ENCODE measurements at regions of chr15 and their contacts with region 1.

Region 1: DNA sequence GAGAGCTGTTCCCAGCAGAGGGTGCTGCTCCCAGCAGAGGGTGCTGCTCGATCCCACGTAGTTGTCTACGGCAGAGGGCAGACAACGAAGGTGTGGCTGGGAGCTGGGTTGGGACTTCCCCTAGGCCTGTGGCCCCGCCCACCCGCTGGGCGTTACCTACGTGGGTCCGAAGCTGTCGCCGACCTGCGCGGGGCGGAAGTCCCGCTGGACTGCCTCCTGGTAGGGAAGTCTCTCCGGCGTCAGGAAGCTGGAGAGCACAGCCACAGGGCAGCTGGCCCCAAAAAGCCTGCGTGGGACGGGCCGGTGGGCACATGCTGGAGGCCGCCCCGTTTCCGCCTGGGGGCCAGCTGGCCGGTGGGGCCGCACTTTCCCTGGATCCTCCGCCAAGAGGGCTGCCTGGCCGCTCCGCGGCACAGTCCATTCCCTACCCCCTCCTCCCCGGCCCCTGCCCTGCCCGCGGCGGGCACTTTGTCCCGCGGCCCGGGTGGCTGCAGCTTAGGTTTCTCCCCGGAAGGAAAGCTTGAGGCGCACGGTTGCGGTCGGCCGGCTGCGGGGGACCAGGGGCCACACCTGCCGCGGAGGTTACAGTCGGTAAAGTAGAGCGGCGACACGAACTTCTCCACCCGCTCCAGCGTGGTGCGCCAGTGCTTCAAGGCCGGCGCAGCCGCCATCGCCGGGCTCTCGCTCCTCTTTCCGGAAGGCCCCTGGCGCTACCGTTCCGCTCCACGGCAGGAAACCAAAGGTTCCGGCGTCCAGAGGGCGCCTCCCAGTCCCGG is at the start of gene MAN2C1:
- DNase-seq: peak; percentile 97
- H3K4me3 Mint-ChIP-seq: peak within 1 kb of the TSS; percentile 91
- H3K27ac Mint-ChIP-seq: peak within 1 kb of the TSS; percentile 96
- H3K4me1 Mint-ChIP-seq: peaks cover 8% of the 10 kb centered on the region
- H3K27me3 Mint-ChIP-seq: no peaks in the 10 kb centered on the region
- CTCF ChIP-seq: peak; percentile 64
- total RNA-seq, gene MAN2C1: 163 and 165 TPM in 2 replicates

Region 2: GRCh38 chr15:75178171-75179075 is 189.7 kb before region 1 on chr15:
- CTCF ChIA-PET with region 1: no interaction called
- POLR2A ChIA-PET with region 1: no interaction called
- intact Hi-C with region 1: no loop called
- DNase-seq: no peak
- H3K4me3 Mint-ChIP-seq: no peak overlapping the region
- H3K27ac Mint-ChIP-seq: no peak overlapping the region
- H3K4me1 Mint-ChIP-seq: peaks cover 14% of the 10 kb centered on the region
- H3K27me3 Mint-ChIP-seq: no peaks in the 10 kb centered on the region
- CTCF ChIP-seq: no peak

Region 3: DNA sequence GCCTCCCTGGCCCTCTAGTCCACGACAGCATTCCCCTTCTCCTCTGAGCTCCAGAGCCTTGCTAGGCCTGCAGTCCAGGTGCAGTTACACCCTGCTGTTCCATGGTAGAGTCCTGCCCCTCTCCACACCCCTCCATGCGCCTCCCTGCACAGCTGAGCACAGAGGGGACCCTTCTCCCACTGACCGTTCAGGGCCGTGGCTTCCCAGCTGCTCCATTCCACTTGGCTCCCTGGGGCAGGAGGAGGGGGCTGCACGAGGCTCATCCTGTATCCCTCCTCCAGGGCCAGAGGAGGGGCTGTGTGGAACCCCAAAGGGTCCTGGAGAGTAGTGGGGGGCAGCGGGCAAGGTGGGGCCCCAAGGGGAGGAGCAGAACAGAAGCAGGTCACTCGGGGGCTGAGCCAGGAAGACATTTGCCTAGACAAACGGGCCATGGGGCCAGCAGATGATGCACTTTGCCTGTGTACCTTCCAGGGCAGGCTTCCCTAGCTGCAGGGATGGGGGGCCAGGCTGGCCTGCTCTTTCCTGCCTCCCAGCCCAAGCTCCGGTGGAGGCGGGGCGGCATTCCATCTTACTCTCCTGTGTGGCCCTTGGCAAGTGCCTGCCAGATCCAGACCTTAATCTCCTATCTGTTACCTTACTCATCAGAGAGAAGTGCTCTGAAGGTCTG is 130.7 kb before region 1 on chr15:
- CTCF ChIA-PET with region 1: no interaction called
- POLR2A ChIA-PET with region 1: no interaction called
- intact Hi-C with region 1: no loop called
- DNase-seq: no peak
- H3K4me3 Mint-ChIP-seq: no peak overlapping the region
- H3K27ac Mint-ChIP-seq: no peak overlapping the region
- H3K4me1 Mint-ChIP-seq: no peaks in the 10 kb centered on the region
- H3K27me3 Mint-ChIP-seq: peaks cover 47% of the 10 kb centered on the region
- CTCF ChIP-seq: no peak

Region 4: DNA sequence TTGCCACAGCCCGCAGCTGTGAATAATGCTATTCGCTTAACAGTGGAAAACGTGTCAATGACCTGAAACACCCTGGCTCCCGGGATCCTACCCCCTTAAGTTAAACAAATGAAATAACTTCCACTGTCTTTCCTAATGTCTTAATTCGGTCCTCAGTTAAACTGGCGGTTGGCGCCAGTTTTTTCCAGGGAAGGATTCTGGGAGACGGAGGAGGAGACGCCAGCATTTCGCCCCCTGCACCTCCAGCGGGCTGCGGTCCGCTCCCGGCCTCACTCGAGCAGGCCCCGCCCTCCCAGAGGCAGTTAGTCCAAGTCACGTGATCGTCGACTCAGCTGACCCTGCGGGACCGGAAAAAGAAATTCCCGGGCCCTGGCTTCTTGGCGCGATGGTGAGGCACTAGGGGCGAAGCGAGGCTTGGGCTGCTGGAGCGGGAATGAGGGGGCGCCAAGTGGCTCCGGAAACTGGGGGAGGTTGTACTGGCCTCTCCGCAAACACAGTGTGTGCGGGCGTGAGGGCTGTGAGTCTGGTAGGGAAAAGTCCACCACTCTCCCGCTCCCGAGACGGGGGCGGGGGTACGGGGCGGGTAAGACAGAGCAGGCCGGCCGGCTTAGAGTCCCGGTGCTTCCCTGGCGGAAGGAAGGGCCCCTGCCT is 32.3 kb before region 1 on chr15 and contains the start of gene COMMD4:
- CTCF ChIA-PET with region 1: interaction called, 3 read pairs
- POLR2A ChIA-PET with region 1: interaction called, 21 read pairs
- intact Hi-C with region 1: no loop called
- DNase-seq: peak; percentile 94
- H3K4me3 Mint-ChIP-seq: peak within 1 kb of the TSS; percentile 92
- H3K27ac Mint-ChIP-seq: peak within 1 kb of the TSS; percentile 98
- H3K4me1 Mint-ChIP-seq: peaks cover 9% of the 10 kb centered on the region
- H3K27me3 Mint-ChIP-seq: no peaks in the 10 kb centered on the region
- CTCF ChIP-seq: no peak
- total RNA-seq, gene COMMD4: 43.9 and 47.3 TPM in 2 replicates

Region 5: GRCh38 chr15:75397494-75397893 is 29.4 kb after region 1 on chr15:
- CTCF ChIA-PET with region 1: interaction called, 3 read pairs
- POLR2A ChIA-PET with region 1: interaction called, 10 read pairs
- intact Hi-C with region 1: no loop called
- DNase-seq: no peak
- H3K4me3 Mint-ChIP-seq: no peak overlapping the region
- H3K27ac Mint-ChIP-seq: no peak overlapping the region
- H3K4me1 Mint-ChIP-seq: no peaks in the 10 kb centered on the region
- H3K27me3 Mint-ChIP-seq: no peaks in the 10 kb centered on the region
- CTCF ChIP-seq: no peak

Region 6: DNA sequence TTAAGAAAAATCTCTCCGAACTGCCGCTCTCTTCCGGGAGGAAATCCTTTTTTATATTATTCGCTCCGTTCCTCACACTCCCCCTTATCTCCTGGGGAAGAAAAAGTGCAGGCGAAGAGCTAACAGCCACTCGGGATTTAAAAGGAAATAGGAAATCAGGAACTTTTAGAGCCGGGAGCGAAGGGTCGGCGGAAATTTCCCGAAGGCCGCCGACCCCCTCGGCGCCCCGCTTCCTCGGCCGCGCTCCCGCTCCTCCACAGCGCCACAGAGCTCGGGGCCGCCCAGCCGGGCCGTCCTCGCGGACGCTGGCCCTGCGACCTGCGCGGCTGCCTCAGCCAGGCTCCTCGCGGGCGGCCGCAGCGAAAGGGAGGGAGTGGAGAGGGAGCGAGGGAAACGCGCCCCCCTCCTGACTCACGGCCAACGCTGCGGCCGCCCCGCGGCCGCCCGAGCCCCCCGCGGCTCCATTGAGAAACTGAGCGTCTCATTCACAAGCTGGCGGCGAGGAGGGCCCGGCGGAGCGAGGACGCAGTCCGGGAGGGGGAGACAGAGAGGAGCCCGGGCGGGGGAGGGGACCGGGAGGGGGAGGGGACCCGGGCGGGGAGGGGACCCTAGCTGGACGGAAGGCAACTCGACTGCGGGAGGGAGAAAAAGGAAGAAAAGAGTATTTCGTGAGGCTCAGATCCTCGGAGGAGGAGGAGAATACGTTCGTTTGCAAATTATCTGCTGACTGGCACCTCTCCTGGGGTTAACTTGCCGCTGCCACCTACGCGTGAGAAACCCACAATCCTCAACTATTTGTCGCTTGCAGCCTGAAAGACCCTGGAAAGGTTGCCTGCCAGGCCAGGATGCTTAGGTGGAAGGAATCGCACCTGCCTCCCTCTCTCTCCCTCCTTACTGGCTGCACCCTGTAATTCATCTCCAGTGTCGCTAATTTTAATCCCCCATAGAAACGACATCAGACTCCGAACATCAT is 211.1 kb after region 1 on chr15 and contains the start of gene PTPN9:
- CTCF ChIA-PET with region 1: interaction called, 3 read pairs
- POLR2A ChIA-PET with region 1: interaction called, 3 read pairs
- intact Hi-C with region 1: loop called (anchors 5 kb)
- DNase-seq: peak; percentile 74
- H3K4me3 Mint-ChIP-seq: peak within 1 kb of the TSS; percentile 95
- H3K27ac Mint-ChIP-seq: peak within 1 kb of the TSS; percentile 97
- H3K4me1 Mint-ChIP-seq: peaks cover 9% of the 10 kb centered on the region
- H3K27me3 Mint-ChIP-seq: no peaks in the 10 kb centered on the region
- CTCF ChIP-seq: peak; percentile 54
- total RNA-seq, gene PTPN9: 31.6 and 33.0 TPM in 2 replicates

Region 7: DNA sequence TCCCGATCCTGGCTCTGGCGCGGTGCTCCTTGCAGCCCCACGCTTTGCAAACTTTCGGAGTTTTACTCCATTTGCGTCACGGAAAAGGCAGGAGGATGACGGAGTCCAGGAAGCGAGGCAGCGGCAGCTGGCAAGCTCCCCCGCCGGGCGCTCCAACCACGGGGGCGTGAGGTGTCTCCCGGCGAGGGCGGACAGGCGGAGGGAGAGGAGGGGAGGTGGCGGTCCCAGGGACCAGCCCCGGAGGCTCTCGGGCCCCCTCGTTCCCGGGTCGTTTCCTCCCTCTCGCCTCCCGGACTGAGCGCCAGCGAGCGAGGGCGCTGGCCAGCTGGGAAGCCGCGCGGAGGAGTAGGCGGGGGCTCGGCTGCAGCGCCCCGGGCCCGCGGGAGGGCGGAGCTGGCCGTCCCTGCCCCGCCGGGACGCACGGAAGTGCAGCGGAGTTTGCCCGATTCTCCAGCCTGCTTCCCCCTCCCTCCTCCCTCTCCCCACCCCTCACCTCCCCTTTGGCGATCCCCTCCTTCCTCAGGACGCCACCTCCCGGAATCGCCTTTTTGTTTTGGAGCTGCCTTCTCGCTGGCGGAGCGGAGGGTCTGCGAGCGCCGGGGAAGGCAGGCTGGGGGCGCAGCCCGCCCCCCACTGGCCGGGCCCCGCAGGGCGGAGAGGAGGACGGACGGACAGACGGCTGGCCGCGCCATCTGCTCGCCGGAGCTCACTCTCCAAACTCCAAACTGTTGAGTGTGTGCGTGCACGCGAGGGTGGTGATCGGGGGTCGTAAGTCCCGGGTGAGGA is 279.5 kb after region 1 on chr15 and contains the start of gene SNX33:
- CTCF ChIA-PET with region 1: interaction called, 4 read pairs
- POLR2A ChIA-PET with region 1: interaction called, 20 read pairs
- intact Hi-C with region 1: no loop called
- DNase-seq: peak; percentile 77
- H3K4me3 Mint-ChIP-seq: peak within 1 kb of the TSS; percentile 87
- H3K27ac Mint-ChIP-seq: peak within 1 kb of the TSS; percentile 78
- H3K4me1 Mint-ChIP-seq: peaks cover 47% of the 10 kb centered on the region
- H3K27me3 Mint-ChIP-seq: no peaks in the 10 kb centered on the region
- CTCF ChIP-seq: peak; percentile 48
- total RNA-seq, gene SNX33: 14.3 and 15.2 TPM in 2 replicates

Region 8: GRCh38 chr15:76006136-76006778 is 638.2 kb after region 1 on chr15:
- CTCF ChIA-PET with region 1: no interaction called
- POLR2A ChIA-PET with region 1: no interaction called
- intact Hi-C with region 1: no loop called
- DNase-seq: peak; percentile 91
- H3K4me3 Mint-ChIP-seq: no peak overlapping the region
- H3K27ac Mint-ChIP-seq: no peak overlapping the region
- H3K4me1 Mint-ChIP-seq: peaks cover 12% of the 10 kb centered on the region
- H3K27me3 Mint-ChIP-seq: no peaks in the 10 kb centered on the region
- CTCF ChIP-seq: no peak

Measured in MCF 10A (cell line).